GM12878 (cell line): ENCODE measurements at regions of chr1 and their contacts with region 1.

Region 1: DNA sequence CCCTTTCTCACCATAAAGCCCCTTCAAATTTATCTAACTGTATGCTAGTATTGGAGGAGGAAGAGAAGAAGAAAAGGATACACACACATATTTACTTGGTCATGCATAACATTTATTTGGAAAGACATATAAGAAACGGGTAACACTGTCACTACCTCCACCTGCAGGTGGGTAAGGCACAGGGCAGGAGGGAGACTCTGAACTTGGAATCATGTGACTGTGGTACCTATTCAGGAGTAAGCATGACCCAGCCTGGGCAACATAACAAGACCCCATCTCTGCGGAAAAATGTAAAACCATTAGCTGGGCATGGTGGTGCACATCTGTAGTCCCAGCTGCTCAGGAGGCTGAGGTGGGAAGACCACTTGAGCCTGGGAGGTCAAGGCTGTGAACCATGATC is 1.4 kb upstream of the PADI6 start:
- DNase-seq: no peak
- ATAC-seq: peak; percentile 48; the same call in 1 of the 3 replicates
- H3K4me3 ChIP-seq: no peak overlapping the region
- H3K27ac ChIP-seq: no peak overlapping the region
- H3K4me1 ChIP-seq: no peaks in the 10 kb centered on the region
- H3K27me3 ChIP-seq: peaks cover 0 to 1% of the 10 kb centered on the region in 2 experiments; a peak in 1 of 4 replicates
- CTCF ChIP-seq: peak; percentile 8 to 26 (median 24); a peak in 2 of 6 replicates
- EP300 ChIP-seq: no peak
- POLR2A ChIP-seq: no peak
- RAD21 ChIP-seq: no peak

Region 2: GRCh38 chr1:18041102-18041501 is 670.5 kb after region 1 on chr1:
- CTCF ChIA-PET with region 1: no interaction called
- POLR2A ChIA-PET with region 1: no interaction called
- RAD21 ChIA-PET with region 1: no interaction called
- SMC1A ChIA-PET with region 1: no interaction called
- in situ Hi-C with region 1: no loop called
- intact Hi-C with region 1: no loop called
- DNase-seq: no peak
- ATAC-seq: peak; percentile 81
- H3K4me3 ChIP-seq: no peak overlapping the region
- H3K27ac ChIP-seq: no peak overlapping the region
- H3K4me1 ChIP-seq: no peaks in the 10 kb centered on the region
- H3K27me3 ChIP-seq: 0 out of 4 replicates have a peak, but pooled peaks cover 0 to 2% of the 10 kb centered on the region in 2 experiments
- CTCF ChIP-seq: no peak
- EP300 ChIP-seq: no peak
- POLR2A ChIP-seq: no peak
- RAD21 ChIP-seq: no peak

Region 3: GRCh38 chr1:18246543-18246942 is 875.9 kb after region 1 on chr1:
- CTCF ChIA-PET with region 1: no interaction called
- POLR2A ChIA-PET with region 1: interaction called, 15 read pairs
- RAD21 ChIA-PET with region 1: no interaction called
- SMC1A ChIA-PET with region 1: no interaction called
- in situ Hi-C with region 1: no loop called
- intact Hi-C with region 1: no loop called
- DNase-seq: no peak
- ATAC-seq: no peak
- H3K4me3 ChIP-seq: no peak overlapping the region
- H3K27ac ChIP-seq: no peak overlapping the region
- H3K4me1 ChIP-seq: no peaks in the 10 kb centered on the region
- H3K27me3 ChIP-seq: no peaks in the 10 kb centered on the region; a peak in 1 of 4 replicates
- CTCF ChIP-seq: peak in 1 of 3 experiments; percentile 15; a peak in 2 of 6 replicates
- EP300 ChIP-seq: no peak
- POLR2A ChIP-seq: no peak
- RAD21 ChIP-seq: no peak